Body of pancreas (tissue), 4 donors: ENCODE measurements at regions of chr4 and their contacts with region 1.

Region 1: DNA sequence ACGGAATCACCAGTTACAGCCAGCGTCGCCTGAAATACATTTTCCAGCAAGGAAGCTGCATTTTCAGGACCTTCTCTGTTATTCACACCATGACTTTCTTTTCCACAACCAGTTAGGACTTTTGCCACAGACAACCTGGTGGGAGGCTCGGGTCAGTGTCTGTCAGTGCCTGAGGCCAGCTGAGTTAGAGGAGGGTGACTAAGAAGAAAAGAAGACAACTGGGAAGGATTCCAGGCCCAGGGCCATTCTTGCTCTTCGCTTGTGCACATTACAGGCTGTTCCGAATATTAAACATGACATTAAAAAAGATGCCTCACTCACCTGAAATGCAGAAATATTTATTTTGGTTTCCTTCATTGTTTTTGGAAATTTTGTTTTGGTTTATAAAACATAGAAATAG is 21.4 kb upstream of the CENPU start:
- DNase-seq: peak in 1 of 4 donors; percentile 40
- ATAC-seq: no peak
- H3K4me3 ChIP-seq: no peak overlapping the region
- H3K27ac ChIP-seq: no peak overlapping the region
- H3K4me1 ChIP-seq: no peaks in the 10 kb centered on the region
- H3K27me3 ChIP-seq: no peaks in the 10 kb centered on the region
- CTCF ChIP-seq: no peak
- POLR2A ChIP-seq: no peak

Region 2: DNA sequence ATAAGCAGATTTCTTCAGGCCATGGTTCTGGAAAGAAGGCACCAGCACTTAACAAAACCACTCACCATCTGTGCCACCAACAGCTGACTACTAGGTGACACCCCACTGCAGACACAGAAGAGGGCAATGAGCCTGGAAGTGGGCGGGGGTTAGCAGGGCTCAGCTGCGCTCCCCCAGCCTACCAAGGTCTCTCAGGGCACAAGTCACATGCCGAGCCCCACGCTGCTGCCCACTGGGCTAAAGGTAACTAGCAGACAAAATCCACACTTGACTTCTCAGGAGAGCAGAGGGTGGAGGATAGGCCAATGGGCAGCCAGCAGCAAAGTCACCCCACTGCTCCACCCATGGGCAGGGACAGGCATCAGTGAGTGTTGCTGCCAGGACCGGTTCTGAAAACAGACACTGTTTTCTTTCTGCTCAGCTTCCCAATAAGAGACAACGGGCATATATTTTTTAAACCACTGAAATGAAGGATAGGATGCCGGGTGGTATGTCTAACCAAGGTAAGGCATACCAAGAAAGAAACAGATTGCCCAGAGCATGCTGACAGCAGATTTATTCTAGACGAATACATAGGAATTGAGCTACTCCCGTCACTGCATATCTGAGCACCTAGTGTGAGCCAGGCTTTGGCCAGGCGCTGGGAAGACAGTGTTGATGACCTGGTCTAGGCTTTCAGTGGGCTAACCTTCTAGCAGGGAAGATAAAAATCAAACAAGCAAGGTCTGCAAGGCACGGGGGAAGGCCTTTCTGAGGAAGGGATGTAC is 50.4 kb after region 1 on chr4:
- intact Hi-C with region 1: loop called (anchors 10 kb)
- DNase-seq: peak; percentile 83 to 96 (median 88)
- ATAC-seq: peak; percentile 94
- H3K4me3 ChIP-seq: no peak overlapping the region
- H3K27ac ChIP-seq: peak overlapping the region; percentile 18 to 88 (median 53)
- H3K4me1 ChIP-seq: peaks cover 54% of the 10 kb centered on the region
- H3K27me3 ChIP-seq: no peaks in the 10 kb centered on the region
- CTCF ChIP-seq: peak in 3 of 7 experiments; percentile 12 to 31 (median 22)
- POLR2A ChIP-seq: peak in 2 of 3 donors; percentile 29